Activated CD4-positive, alpha-beta memory T cell treated with anti-CD3 and anti-CD28 coated beads for 36 hours (primary cell): ENCODE measurements at regions of chr15 and their contacts with region 1.

Region 1: DNA sequence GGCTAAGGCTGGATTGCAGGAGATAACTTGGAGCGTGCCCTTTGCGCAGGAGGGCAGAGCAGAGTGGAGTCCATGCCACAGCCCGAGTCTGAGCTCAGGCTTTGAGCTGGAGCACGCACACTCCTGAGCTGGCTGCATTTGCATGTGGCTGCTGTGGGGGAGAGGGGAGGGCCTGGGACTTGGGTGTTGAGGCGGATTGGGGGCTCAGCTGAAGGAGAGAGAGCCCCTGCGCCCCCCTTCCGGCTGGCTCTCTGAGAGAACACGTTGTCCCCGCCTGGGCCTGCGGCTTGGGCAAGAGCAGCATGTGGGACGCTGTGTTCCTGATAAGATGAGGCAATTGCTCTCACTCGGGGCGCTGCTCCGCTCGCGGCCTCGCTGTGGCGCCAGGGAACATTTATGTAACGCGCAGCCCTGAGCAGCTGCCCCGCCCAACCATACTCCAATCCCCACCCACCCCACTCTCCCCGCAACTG is 39.1 kb downstream of the KLF13 start:
- DNase-seq: peak; percentile 89
- H3K4me3 Mint-ChIP-seq: peak overlapping the region; percentile 61
- H3K27ac Mint-ChIP-seq: peak overlapping the region; percentile 97
- H3K4me1 Mint-ChIP-seq: peaks cover 99% of the 10 kb centered on the region
- H3K27me3 Mint-ChIP-seq: no peaks in the 10 kb centered on the region

Region 2: GRCh38 chr15:31215490-31216214 is 150.0 kb before region 1 on chr15:
- CTCF ChIA-PET with region 1: interaction called, 9 read pairs
- POLR2A ChIA-PET with region 1: interaction called, 3 read pairs
- intact Hi-C with region 1: loop called (anchors 5 kb)
- DNase-seq: peak; percentile 88
- H3K4me3 Mint-ChIP-seq: peak overlapping the region; percentile 68
- H3K27ac Mint-ChIP-seq: peak overlapping the region; percentile 56
- H3K4me1 Mint-ChIP-seq: peaks cover 15% of the 10 kb centered on the region
- H3K27me3 Mint-ChIP-seq: no peaks in the 10 kb centered on the region

Region 3: DNA sequence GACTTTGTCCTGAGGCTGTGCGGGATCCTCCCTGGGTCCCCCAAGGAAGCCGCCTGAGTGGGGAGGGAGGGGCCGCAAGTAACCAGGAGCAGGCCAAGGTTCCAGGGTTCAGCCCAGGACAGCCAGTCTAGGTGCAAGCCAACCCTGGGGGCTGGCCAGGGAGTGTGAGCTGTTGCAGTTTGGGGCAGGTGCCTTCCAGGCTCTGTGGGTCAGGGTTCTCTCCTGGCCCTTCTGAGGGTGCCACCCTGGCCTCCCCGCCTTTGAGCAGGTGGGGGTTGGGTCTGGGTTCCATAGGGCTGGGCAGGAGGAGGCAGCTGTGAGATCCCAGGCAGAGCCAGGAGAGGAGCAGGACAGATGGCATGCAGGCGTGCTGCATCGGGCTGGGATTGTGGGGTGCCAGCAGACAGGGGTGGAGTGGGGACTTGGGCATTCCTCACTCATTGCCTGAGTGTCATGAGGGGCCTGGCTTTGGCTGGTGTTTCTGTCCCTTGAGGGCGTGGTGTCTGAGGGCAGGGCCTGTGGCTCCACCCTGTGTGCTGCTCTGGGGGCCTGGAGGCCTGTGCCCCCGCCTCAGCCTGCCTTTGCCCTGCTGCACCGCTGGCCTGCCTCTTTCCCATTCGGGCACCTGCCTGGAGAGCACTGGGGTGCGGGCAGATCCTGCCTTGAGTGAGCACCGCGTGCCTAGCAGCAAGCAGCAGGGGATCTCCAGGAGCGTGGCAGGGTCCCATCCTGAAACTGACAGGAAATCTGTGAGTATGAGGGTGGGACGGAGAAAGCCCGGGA is 20.7 kb before region 1 on chr15:
- CTCF ChIA-PET with region 1: interaction called, 20 read pairs
- POLR2A ChIA-PET with region 1: interaction called, 97 read pairs
- intact Hi-C with region 1: loop called (anchors 1 kb)
- DNase-seq: peak; percentile 63
- H3K4me3 Mint-ChIP-seq: peak overlapping the region; percentile 93
- H3K27ac Mint-ChIP-seq: peak overlapping the region; percentile 100
- H3K4me1 Mint-ChIP-seq: peaks cover 98% of the 10 kb centered on the region
- H3K27me3 Mint-ChIP-seq: no peaks in the 10 kb centered on the region

Region 4: DNA sequence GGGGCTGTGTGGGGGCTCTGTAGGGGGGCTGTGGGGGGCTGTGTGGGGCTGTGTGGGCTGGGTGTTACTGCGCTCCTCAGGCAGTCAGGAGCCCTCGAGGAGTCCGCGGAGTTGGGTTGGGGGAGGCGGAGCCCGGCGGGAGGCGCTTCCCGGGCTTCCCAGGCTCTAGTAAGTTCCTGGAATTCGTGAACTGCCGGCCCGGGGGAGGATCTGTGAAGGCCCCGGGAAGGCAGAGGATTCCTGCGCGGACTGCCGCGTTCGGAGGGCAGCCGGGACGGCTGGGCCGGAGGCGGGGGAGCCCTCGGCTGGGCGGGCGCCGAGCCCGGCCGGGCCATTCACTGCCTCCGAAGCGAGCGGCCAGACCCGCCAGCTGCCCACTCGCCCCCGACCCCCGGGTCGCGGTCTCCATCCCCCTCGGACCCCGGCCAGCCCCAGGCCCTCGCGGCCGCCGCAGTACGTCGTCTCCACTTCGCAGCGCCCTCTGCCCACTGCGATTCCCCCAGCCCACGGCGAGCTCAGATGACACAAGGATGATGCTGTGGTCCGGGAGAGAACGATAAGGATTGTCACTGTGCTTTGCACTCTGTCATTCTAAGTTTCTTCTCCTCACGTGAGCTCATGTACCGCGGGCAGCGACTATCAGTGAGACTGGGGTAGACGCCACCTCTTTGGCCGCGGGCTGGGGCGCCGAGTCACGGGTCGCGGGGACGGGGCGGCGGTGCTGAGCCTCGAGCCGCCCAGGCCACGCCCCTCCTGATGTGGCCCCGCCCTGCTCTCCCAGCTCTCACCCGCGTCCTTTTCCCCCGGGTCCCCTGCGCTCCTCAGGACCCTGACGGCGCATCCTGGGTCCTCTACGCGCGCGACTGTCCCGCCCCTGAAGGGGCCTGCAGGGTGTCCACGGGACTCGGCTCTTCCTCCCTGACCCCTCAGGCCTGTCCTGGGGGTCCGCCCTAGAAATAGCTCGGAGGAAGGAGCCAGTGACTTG is 26.3 kb after region 1 on chr15:
- CTCF ChIA-PET with region 1: interaction called, 10 read pairs
- POLR2A ChIA-PET with region 1: interaction called, 12 read pairs
- intact Hi-C with region 1: loop called (anchors 2 kb)
- DNase-seq: peak; percentile 90
- H3K4me3 Mint-ChIP-seq: peak overlapping the region; percentile 87
- H3K27ac Mint-ChIP-seq: peak overlapping the region; percentile 87
- H3K4me1 Mint-ChIP-seq: peaks cover 34% of the 10 kb centered on the region
- H3K27me3 Mint-ChIP-seq: no peaks in the 10 kb centered on the region

Region 5: GRCh38 chr15:31405200-31405920 is 39.7 kb after region 1 on chr15:
- CTCF ChIA-PET with region 1: no interaction called
- POLR2A ChIA-PET with region 1: no interaction called
- intact Hi-C with region 1: no loop called
- DNase-seq: peak; percentile 30
- H3K4me3 Mint-ChIP-seq: peak overlapping the region; percentile 21
- H3K27ac Mint-ChIP-seq: peak overlapping the region; percentile 36
- H3K4me1 Mint-ChIP-seq: peaks cover 16% of the 10 kb centered on the region
- H3K27me3 Mint-ChIP-seq: no peaks in the 10 kb centered on the region

Region 6: GRCh38 chr15:31483053-31483985 is 117.6 kb after region 1 on chr15:
- CTCF ChIA-PET with region 1: interaction called, 79 read pairs
- POLR2A ChIA-PET with region 1: interaction called, 5 read pairs
- intact Hi-C with region 1: loop called (anchors 2 kb)
- DNase-seq: peak; percentile 73
- H3K4me3 Mint-ChIP-seq: peak overlapping the region; percentile 92
- H3K27ac Mint-ChIP-seq: peak overlapping the region; percentile 91
- H3K4me1 Mint-ChIP-seq: peaks cover 61% of the 10 kb centered on the region
- H3K27me3 Mint-ChIP-seq: peaks cover 5% of the 10 kb centered on the region